Common myeloid progenitor, CD34-positive (primary cell): ENCODE measurements at regions of chr11 and their contacts with region 1.

Region 1: DNA sequence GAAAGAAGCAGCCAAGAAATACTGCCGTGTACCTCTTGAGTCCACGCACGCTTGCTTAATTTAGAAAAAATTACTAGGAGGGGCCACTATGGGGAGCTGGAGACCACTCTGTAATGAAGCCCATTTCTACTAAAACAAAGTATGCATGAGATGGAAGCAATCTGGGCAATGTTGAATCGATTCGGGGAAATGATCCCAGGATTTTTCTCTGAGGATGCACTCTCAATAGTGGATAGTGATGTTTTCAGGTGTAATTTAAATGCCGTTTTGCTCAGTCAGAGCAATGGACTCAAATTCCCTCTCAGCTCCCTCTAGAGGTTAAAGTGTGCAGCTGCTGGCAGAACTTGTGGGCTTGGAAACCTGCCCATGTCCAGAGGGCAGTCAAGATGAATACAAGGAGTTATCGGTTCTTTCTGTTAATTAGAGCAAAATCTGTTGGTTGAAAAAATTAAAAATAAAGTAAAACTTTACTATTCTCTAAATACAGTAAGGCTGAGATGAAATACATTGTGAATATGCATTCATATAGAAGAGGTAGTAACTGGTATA is 64.1 kb downstream of the ME3 start:
- DNase-seq: peak; percentile 67 to 77 (median 77)
- H3K4me3 ChIP-seq: peak overlapping the region in 4 of 7 experiments; percentile 11 to 69 (median 52)
- H3K27ac ChIP-seq: no peak overlapping the region
- H3K4me1 ChIP-seq: peaks cover 0 to 7% (median 0%) of the 10 kb centered on the region in 4 experiments
- H3K27me3 ChIP-seq: no peaks in the 10 kb centered on the region

Region 2: GRCh38 chr11:86596861-86597586 is 11.3 kb before region 1 on chr11:
- CTCF ChIA-PET with region 1: interaction called, 21 read pairs
- POLR2A ChIA-PET with region 1: no interaction called
- DNase-seq: peak in 2 of 3 donors; percentile 44 to 58
- H3K4me3 ChIP-seq: peak overlapping the region in 1 of 7 experiments; percentile 4
- H3K27ac ChIP-seq: no peak overlapping the region
- H3K4me1 ChIP-seq: peaks cover 17 to 24% (median 18%) of the 10 kb centered on the region in 4 experiments
- H3K27me3 ChIP-seq: no peaks in the 10 kb centered on the region

Region 3: GRCh38 chr11:86620891-86621521 is 12.7 kb after region 1 on chr11:
- CTCF ChIA-PET with region 1: interaction called, 12 read pairs
- POLR2A ChIA-PET with region 1: interaction called, 3 read pairs
- DNase-seq: no peak
- H3K4me3 ChIP-seq: no peak overlapping the region
- H3K27ac ChIP-seq: no peak overlapping the region
- H3K4me1 ChIP-seq: no peaks in the 10 kb centered on the region
- H3K27me3 ChIP-seq: no peaks in the 10 kb centered on the region

Region 4: DNA sequence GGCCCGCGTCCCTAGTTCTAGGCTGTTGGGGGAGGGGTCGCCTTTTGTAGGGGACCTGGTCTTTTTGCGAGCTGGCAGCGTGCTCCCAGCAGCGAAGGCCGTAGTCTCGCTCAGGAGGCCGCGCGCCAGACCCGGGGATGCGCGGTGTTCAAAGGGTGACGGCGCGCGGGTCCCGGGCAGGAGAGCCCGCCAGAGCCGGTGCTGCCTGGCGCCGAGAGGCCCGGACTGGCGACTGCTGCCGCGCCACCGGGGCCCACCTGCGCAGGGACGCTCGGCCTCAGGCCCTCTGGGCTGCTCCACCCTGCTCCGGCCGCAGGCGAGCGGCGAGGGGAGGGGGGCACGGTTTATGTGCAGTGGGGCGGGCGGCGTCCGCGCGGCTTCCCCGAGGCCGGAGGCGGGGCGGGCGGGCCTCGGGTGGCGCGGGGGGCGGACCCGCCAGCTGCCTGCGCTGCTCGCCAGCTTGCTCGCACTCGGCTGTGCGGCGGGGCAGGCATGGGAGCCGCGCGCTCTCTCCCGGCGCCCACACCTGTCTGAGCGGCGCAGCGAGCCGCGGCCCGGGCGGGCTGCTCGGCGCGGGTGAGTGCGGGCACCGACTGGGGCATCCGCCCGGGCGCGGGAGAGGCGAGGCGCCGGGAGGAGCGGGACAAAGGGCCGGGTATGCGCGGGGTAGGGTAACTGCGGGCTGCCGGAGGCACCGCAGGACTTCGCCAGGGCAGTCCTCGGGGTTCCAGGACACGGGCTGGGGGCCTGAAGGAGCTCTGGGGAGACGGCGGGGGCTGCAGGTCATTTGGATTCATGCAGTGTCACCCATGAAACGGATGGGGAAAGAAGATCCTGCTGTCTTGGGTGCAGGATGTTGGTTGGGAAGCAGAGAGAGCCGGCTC is 192.0 kb after region 1 on chr11 and contains the start of gene PRSS23:
- CTCF ChIA-PET with region 1: interaction called, 14 read pairs
- POLR2A ChIA-PET with region 1: no interaction called
- DNase-seq: peak; percentile 18 to 68 (median 54)
- H3K4me3 ChIP-seq: peak within 1 kb of the TSS; percentile 50 to 78 (median 60)
- H3K27ac ChIP-seq: no peak within 1 kb of the TSS
- H3K4me1 ChIP-seq: peaks cover 0 to 14% (median 13%) of the 10 kb centered on the region in 4 experiments
- H3K27me3 ChIP-seq: peaks cover 4 to 19% (median 7%) of the 10 kb centered on the region in 5 experiments